Aorta (tissue), 5 donors: ENCODE measurements at regions of chr11 and their contacts with region 1.

Region 1: GRCh38 chr11:126416542-126417090 is 61.1 kb downstream of the ST3GAL4 start:
- DNase-seq: peak; percentile 95 to 96
- ATAC-seq: peak; percentile 91
- H3K4me3 ChIP-seq: peak overlapping the region in 1 of 2 donors; percentile 12
- H3K27ac ChIP-seq: peak overlapping the region in 1 of 2 donors; percentile 66
- H3K4me1 ChIP-seq: no peaks in the 10 kb centered on the region
- H3K27me3 ChIP-seq: no peaks in the 10 kb centered on the region

Region 2: DNA sequence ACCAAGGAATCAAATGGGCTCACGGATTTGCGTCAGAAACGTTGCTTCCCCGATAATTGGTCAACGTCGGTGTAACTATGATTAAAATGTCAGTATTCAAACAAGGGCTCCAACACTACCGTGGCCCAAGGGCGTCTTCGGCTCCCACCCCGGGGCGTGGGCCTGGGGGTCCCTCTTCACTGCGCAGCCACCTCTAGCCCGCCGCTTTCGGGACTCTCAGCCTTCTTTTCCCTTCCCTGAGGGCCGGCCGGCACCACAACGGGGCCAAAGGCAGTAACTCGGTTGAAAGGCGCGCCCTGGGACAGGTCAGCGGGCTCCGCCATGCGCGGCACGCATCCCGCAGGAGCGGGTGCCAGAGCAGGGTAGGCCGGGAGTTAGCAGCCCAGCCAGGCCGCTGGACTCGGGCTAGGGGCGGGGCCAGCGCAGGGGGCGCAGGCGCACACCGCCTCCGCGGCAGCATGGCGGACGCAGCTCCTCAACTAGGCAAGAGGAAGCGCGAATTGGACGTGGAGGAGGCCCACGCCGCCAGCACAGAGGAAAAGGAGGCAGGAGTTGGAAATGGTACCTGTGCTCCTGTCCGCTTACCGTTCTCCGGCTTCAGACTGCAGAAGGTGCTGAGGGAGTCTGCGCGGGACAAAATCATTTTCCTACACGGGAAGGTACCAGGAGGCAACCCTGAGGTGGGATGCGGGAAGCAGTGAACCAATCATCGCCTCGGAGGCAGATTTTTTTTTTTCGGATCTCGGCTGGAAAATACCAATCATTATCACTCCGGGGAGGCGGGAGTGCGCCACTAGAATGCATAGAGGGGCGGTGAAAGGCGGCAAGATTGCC is 112.8 kb before region 1 on chr11 and contains the start of gene DCPS:
- intact Hi-C with region 1: loop called in 1 of 2 experiments (anchors 5 kb)
- DNase-seq: peak; percentile 94 to 96
- ATAC-seq: peak; percentile 100
- H3K4me3 ChIP-seq: peak within 1 kb of the TSS; percentile 10 to 56
- H3K27ac ChIP-seq: peak within 1 kb of the TSS in 1 of 2 donors; percentile 76
- H3K4me1 ChIP-seq: no peaks in the 10 kb centered on the region
- H3K27me3 ChIP-seq: peaks cover 0 to 2% of the 10 kb centered on the region in 2 donors
- total RNA-seq, gene DCPS: 9.0 to 9.9 TPM

Region 3: DNA sequence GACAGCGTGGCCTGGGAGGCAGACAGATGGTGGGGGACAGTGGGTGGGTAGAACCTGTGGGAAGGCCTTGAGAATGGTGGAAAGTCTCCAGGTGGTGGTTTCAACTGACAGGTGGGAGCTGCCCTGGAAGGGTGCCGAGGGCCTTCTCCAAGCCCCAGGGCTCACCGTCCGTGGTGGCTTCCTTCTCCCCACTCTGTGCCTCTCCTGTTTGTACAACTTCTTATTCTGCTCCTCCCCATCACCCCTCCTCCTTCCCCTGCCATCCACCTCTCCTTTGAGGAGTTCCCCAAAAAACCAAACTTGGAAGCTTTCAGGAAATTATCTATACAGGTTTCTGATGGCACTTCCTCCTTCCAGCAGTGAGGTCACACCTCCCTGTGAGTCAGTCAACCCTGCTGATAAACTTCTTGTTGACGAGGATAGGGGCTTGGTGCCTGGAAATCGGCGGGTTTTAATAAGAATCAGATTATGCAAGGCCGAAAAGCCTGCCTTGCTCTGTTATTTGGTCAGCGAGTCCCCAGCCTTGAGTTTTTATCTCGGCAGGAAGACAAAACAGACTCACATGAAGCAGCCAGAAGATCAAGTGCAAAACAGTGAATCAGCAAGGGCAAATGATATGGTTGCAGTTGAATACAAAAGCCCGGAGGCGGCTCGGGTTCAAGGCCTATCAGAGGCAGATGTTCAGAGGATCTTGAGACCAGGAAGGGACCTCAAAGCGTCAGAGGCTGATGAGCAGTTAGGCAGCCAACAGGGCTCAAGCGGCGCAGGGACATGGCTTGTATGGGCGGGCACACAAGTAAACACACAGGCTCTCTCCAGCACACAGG is 70.6 kb before region 1 on chr11:
- intact Hi-C with region 1: loop called in 1 of 2 experiments (anchors 5 kb)
- DNase-seq: peak; percentile 77
- ATAC-seq: peak; percentile 68
- H3K4me3 ChIP-seq: no peak overlapping the region
- H3K27ac ChIP-seq: peak overlapping the region in 1 of 2 donors; percentile 1
- H3K4me1 ChIP-seq: no peaks in the 10 kb centered on the region
- H3K27me3 ChIP-seq: no peaks in the 10 kb centered on the region

Region 4: GRCh38 chr11:126355324-126355925 is 61.2 kb before region 1 on chr11 and contains the start of gene ST3GAL4:
- intact Hi-C with region 1: loop called in 1 of 2 experiments (anchors 5 kb)
- DNase-seq: peak; percentile 90 to 94
- ATAC-seq: peak; percentile 87
- H3K4me3 ChIP-seq: peak within 1 kb of the TSS; percentile 89 to 95
- H3K27ac ChIP-seq: peak within 1 kb of the TSS in 1 of 2 donors; percentile 76
- H3K4me1 ChIP-seq: peaks cover 0 to 9% of the 10 kb centered on the region in 2 donors
- H3K27me3 ChIP-seq: no peaks in the 10 kb centered on the region
- total RNA-seq, gene ST3GAL4: 26.5 to 36.3 TPM

Region 5: GRCh38 chr11:126510621-126511370 is 94.2 kb after region 1 on chr11:
- intact Hi-C with region 1: no loop called
- DNase-seq: no peak
- ATAC-seq: no peak
- H3K4me3 ChIP-seq: no peak overlapping the region
- H3K27ac ChIP-seq: no peak overlapping the region
- H3K4me1 ChIP-seq: no peaks in the 10 kb centered on the region
- H3K27me3 ChIP-seq: peaks cover 0 to 7% of the 10 kb centered on the region in 2 donors

Region 6: GRCh38 chr11:126543691-126544090 is 127.1 kb after region 1 on chr11:
- intact Hi-C with region 1: no loop called
- DNase-seq: no peak
- ATAC-seq: no peak
- H3K4me3 ChIP-seq: no peak overlapping the region
- H3K27ac ChIP-seq: no peak overlapping the region
- H3K4me1 ChIP-seq: no peaks in the 10 kb centered on the region
- H3K27me3 ChIP-seq: no peaks in the 10 kb centered on the region